Natural killer cell (primary cell): ENCODE measurements at regions of chr2 and their contacts with region 1.

Region 1: DNA sequence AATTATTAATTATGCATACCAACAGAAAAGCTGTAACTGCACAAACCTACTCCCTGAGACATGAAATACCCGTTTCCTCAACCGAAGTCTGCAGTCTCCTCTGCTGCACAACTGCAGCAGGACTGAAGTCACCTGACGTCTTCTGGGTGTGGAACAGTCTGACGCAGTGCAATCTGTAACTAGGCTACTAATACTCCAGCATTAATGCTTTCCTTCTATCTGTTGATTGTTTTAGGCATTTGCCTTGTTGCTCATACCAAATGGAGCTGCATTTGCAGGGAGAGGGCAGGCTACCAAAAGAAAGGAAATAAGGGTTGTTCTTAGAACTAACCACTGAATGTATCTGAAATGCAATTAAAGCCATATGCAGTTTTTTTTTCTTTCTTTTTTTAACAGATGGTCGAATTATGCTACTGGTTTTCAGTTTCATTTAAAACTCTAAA is 40.1 kb downstream of the RTN4 start:
- DNase-seq: peak; percentile 33 to 79
- ATAC-seq: peak; percentile 92 to 96 (median 93)
- H3K4me3 ChIP-seq: peak overlapping the region; percentile 53
- H3K4me3 Mint-ChIP-seq: peak overlapping the region; percentile 92
- H3K27ac ChIP-seq: peak overlapping the region; percentile 68
- H3K27ac Mint-ChIP-seq: peak overlapping the region; percentile 84 to 92
- H3K4me1 ChIP-seq: peaks cover 7% of the 10 kb centered on the region
- H3K4me1 Mint-ChIP-seq: peaks cover 64 to 66% of the 10 kb centered on the region in 2 donors
- H3K27me3 ChIP-seq: no peaks in the 10 kb centered on the region
- H3K27me3 Mint-ChIP-seq: no peaks in the 10 kb centered on the region
- CTCF ChIP-seq: no peak

Region 2: DNA sequence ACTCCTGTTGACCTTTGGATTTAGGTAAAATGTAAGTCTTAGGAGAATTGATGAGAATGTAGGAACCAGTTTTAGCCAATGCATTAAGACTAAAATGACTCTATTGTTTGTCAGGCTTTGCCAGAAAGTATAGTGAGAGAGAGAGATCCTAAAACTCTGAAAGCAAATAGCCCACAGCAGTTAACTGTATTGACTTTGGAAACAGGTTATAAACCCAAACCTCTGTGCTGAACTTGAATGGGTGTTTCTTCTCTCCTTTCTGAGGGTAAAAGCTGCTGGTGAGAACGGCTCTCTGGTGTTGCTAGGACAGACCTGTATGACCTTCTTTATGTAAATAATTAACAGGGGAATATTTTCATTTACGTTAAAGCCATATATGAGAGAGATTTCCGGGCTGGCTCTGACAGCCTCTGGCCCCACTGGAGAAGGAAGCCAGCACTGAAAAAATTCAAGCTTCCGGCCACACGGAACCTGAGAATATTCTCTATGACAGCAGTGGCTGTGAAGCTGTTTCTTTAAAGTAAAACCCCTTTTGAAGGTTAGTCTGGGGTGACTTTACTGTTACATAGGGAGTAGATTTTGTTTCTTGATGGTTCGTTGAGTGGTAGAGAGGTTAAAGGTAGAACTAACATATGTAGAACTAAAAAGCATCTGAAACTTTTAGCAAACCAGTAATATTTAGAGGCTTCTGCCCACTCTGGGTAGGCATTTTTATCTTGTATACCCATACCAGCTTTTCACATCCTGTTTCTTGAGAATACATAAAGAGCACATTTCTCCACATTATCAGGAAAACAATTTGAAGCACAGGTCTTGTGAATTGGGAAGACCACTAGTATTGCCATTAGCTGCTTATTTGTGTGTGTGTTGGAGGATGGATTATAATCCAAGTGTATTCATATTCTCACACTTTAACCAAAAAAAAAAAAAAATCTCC is 430.2 kb before region 1 on chr2:
- intact Hi-C with region 1: no loop called
- DNase-seq: peak in 1 of 2 donors; percentile 83
- ATAC-seq: peak in 2 of 3 donors; percentile 32 to 93
- H3K4me3 ChIP-seq: no peak overlapping the region
- H3K4me3 Mint-ChIP-seq: peak overlapping the region; percentile 83
- H3K27ac ChIP-seq: peak overlapping the region; percentile 85
- H3K27ac Mint-ChIP-seq: peak overlapping the region; percentile 78 to 97
- H3K4me1 ChIP-seq: peaks cover 72% of the 10 kb centered on the region
- H3K4me1 Mint-ChIP-seq: peaks cover 55 to 82% of the 10 kb centered on the region in 2 donors
- H3K27me3 ChIP-seq: no peaks in the 10 kb centered on the region
- H3K27me3 Mint-ChIP-seq: peaks cover 0 to 3% of the 10 kb centered on the region in 2 donors
- CTCF ChIP-seq: no peak

Region 3: GRCh38 chr2:54665436-54665856 is 344.7 kb before region 1 on chr2:
- intact Hi-C with region 1: no loop called
- DNase-seq: peak in 1 of 2 donors; percentile 72
- ATAC-seq: peak; percentile 36 to 64 (median 57)
- H3K4me3 ChIP-seq: no peak overlapping the region
- H3K4me3 Mint-ChIP-seq: no peak overlapping the region
- H3K27ac ChIP-seq: no peak overlapping the region
- H3K27ac Mint-ChIP-seq: peak overlapping the region in 1 of 2 donors; percentile 13
- H3K4me1 ChIP-seq: peaks cover 5% of the 10 kb centered on the region
- H3K4me1 Mint-ChIP-seq: peaks cover 0 to 5% of the 10 kb centered on the region in 2 donors
- H3K27me3 ChIP-seq: no peaks in the 10 kb centered on the region
- H3K27me3 Mint-ChIP-seq: no peaks in the 10 kb centered on the region
- CTCF ChIP-seq: peak; percentile 62

Region 4: DNA sequence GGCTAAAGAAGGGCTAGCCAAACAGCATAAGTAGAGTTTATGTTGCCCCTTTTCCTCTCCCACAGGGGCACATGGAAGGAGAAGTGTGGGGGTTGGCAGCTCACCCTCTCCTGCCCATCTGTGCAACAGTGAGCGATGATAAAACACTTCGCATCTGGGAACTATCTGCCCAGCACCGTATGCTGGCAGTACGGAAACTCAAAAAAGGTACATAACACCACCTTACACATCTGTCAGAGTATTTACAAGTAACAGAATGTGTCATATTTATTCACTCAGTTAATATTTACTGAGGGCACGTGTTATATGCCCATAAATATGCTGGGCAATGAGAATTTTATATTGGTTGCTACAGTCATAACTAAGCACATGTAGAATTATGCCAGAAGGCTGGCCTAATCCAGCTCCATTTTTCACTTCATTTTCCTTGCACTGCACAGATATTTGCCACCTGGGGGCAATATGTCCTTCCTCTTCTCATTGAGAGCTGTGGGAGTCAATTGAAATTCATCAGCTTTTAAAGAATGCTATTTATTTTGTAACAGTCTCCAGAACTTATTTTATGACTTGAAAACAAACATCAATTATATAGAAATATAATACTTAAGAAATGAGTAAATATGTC is 110.5 kb before region 1 on chr2:
- intact Hi-C with region 1: loop called (anchors 5 kb)
- DNase-seq: peak in 1 of 2 donors; percentile 51
- ATAC-seq: peak in 1 of 3 donors; percentile 43
- H3K4me3 ChIP-seq: no peak overlapping the region
- H3K4me3 Mint-ChIP-seq: no peak overlapping the region
- H3K27ac ChIP-seq: no peak overlapping the region
- H3K27ac Mint-ChIP-seq: peak overlapping the region in 1 of 2 donors; percentile 29
- H3K4me1 ChIP-seq: peaks cover 11% of the 10 kb centered on the region
- H3K4me1 Mint-ChIP-seq: peaks cover 12 to 17% of the 10 kb centered on the region in 2 donors
- H3K27me3 ChIP-seq: no peaks in the 10 kb centered on the region
- H3K27me3 Mint-ChIP-seq: peaks cover 0 to 3% of the 10 kb centered on the region in 2 donors
- CTCF ChIP-seq: peak; percentile 44

Region 5: DNA sequence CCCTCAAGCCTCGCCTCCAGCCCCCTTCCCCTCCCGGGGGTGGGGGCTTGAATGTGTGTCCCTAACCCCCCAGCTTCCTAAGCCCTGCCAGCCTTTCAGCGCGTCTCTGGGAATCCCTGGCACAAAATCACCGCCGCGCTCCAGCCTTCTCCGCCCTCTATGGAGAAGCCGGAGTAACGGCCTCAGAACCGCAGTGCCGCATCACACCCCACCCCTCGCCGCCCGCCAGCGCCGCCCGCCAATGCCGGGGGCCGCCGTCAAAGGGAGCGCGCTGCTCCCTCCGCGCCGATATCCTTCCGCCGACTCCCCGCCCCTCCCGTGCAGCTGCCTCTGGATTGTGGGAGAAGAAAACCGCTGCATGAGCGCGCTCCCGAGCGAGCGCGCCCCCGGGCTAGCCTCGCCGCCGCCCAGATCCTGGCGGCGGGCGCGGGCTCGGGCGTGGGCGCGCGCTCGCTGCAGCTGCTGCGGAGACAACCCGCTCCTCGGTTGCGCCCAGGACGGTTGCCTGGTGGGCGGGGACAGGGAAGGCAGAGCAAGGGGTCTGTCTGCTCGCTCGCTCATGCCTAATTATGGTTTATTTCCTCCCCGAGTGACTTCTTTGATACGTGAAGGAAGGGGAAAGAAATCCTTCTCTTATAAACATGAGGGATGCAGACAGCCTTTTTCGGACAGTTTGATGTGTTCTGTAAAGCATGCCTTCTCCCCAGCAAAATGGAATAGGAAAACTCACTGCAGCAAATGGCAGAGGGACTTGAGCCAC is 409.7 kb after region 1 on chr2 and contains the start of gene CCDC88A:
- intact Hi-C with region 1: loop called (anchors 10 kb)
- DNase-seq: peak; percentile 72 to 95
- ATAC-seq: peak; percentile 83 to 90 (median 84)
- H3K4me3 ChIP-seq: peak within 1 kb of the TSS; percentile 78
- H3K4me3 Mint-ChIP-seq: peak within 1 kb of the TSS; percentile 88
- H3K27ac ChIP-seq: peak within 1 kb of the TSS; percentile 70
- H3K27ac Mint-ChIP-seq: peak within 1 kb of the TSS; percentile 80 to 92
- H3K4me1 ChIP-seq: peaks cover 3% of the 10 kb centered on the region
- H3K4me1 Mint-ChIP-seq: peaks cover 31 to 38% of the 10 kb centered on the region in 2 donors
- H3K27me3 ChIP-seq: no peaks in the 10 kb centered on the region
- H3K27me3 Mint-ChIP-seq: peaks cover 4 to 11% of the 10 kb centered on the region in 2 donors
- CTCF ChIP-seq: no peak
- total RNA-seq, gene CCDC88A: 20.4 to 39.0 (median 26.4) TPM